Activated CD4-positive, alpha-beta T cell treated with anti-CD3 and anti-CD28 coated beads, Interleukin-2, amount 10 ng/mL, durations not matched to agents 24 days and 14 days (primary cell): ENCODE measurements at regions of chr12 and their contacts with region 1.

Region 1: GRCh38 chr12:4506870-4507269 is 31.8 kb upstream of the RAD51AP1 start:
- DNase-seq: peak; percentile 83
- H3K4me3 Mint-ChIP-seq: peak overlapping the region; percentile 55
- H3K27ac Mint-ChIP-seq: peak overlapping the region; percentile 59
- H3K4me1 Mint-ChIP-seq: peaks cover 20% of the 10 kb centered on the region
- H3K27me3 Mint-ChIP-seq: no peaks in the 10 kb centered on the region

Region 2: DNA sequence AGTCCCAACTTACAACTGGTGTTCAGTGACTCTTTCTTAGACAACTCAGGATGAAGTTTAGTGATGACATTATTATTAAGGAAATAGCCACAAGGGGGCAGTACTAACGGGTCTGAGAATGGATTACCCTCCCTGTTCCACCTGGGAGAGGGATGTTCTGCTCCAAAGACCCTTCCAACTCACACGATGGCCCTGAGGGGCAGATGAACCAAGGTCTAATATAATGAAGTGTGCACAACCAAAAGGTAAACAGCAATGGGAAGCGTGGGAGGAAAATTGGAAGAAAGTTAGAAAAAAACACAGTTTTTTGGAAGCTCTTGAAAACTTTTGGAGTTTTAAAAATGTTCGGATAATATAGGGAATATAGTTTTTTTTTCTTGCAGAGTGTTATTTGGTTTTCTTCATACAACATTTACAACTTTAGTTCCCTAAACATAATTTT is 85.3 kb before region 1 on chr12:
- intact Hi-C with region 1: loop called (anchors 5 kb)
- DNase-seq: peak; percentile 79
- H3K4me3 Mint-ChIP-seq: no peak overlapping the region
- H3K27ac Mint-ChIP-seq: no peak overlapping the region
- H3K4me1 Mint-ChIP-seq: peaks cover 9% of the 10 kb centered on the region
- H3K27me3 Mint-ChIP-seq: peaks cover 6% of the 10 kb centered on the region

Region 3: GRCh38 chr12:4538207-4539160 is 31.6 kb after region 1 on chr12 and contains the start of gene RAD51AP1:
- intact Hi-C with region 1: loop called (anchors 2 kb)
- DNase-seq: peak; percentile 98
- H3K4me3 Mint-ChIP-seq: peak within 1 kb of the TSS; percentile 96
- H3K27ac Mint-ChIP-seq: peak within 1 kb of the TSS; percentile 93
- H3K4me1 Mint-ChIP-seq: peaks cover 29% of the 10 kb centered on the region
- H3K27me3 Mint-ChIP-seq: no peaks in the 10 kb centered on the region
- total RNA-seq, gene RAD51AP1: 31.4 and 35.8 TPM in 2 replicates

Region 4: GRCh38 chr12:5806371-5807089 is 1299.7 kb after region 1 on chr12:
- intact Hi-C with region 1: no loop called
- DNase-seq: no peak
- H3K4me3 Mint-ChIP-seq: no peak overlapping the region
- H3K27ac Mint-ChIP-seq: no peak overlapping the region
- H3K4me1 Mint-ChIP-seq: no peaks in the 10 kb centered on the region
- H3K27me3 Mint-ChIP-seq: no peaks in the 10 kb centered on the region